Lower leg skin (tissue), 4 donors: ENCODE measurements at regions of chr3 and their contacts with region 1.

Region 1: GRCh38 chr3:129824926-129825541 is 68.5 kb downstream of the TMCC1 start:
- DNase-seq: no peak
- H3K4me3 ChIP-seq: no peak overlapping the region
- CTCF ChIP-seq: peak in 1 of 3 donors; percentile 59
- POLR2A ChIP-seq: no peak

Region 2: GRCh38 chr3:129627429-129628168 is 197.4 kb before region 1 on chr3:
- intact Hi-C with region 1: loop called (anchors 5 kb)
- DNase-seq: peak in 1 of 2 donors; percentile 93
- H3K4me3 ChIP-seq: peak overlapping the region; percentile 21
- CTCF ChIP-seq: peak in 1 of 3 donors; percentile 79
- POLR2A ChIP-seq: no peak

Region 3: DNA sequence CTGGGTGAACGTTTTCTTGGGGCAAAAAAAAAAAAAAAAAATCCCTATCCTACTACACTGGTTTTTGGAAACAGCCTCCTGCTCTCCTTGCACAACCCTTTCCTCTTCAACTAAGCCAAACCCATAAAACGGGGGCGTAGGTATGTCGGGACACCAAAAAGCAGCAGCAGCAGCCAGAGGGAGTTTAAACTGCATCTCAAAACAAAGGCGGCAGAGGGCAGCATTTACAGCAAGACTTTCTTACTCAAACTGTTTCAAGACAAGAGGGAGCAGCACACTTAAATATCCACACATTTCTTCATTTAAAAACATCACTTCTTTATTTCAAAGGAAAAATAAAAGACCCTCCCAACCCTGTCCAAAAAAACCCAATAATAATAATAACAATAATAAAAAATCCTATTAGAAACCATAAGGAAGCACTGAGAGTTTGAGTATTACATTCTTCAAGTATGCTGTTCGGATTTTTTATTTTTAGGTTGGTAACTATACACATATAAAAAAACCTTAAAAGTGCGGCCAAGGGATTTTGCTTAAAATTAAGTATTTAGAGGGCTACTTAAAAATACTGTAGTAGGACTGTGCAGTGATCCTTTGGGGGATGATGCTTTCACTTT is 174.7 kb before region 1 on chr3:
- intact Hi-C with region 1: loop called (anchors 5 kb)
- DNase-seq: peak; percentile 85 to 93
- H3K4me3 ChIP-seq: no peak overlapping the region
- CTCF ChIP-seq: no peak
- POLR2A ChIP-seq: no peak

Region 4: GRCh38 chr3:129855454-129856419 is 30.7 kb after region 1 on chr3:
- intact Hi-C with region 1: no loop called
- DNase-seq: no peak
- H3K4me3 ChIP-seq: no peak overlapping the region
- CTCF ChIP-seq: no peak
- POLR2A ChIP-seq: no peak